Natural killer cell (primary cell): ENCODE measurements at regions of chr20 and their contacts with region 1.

Region 1: DNA sequence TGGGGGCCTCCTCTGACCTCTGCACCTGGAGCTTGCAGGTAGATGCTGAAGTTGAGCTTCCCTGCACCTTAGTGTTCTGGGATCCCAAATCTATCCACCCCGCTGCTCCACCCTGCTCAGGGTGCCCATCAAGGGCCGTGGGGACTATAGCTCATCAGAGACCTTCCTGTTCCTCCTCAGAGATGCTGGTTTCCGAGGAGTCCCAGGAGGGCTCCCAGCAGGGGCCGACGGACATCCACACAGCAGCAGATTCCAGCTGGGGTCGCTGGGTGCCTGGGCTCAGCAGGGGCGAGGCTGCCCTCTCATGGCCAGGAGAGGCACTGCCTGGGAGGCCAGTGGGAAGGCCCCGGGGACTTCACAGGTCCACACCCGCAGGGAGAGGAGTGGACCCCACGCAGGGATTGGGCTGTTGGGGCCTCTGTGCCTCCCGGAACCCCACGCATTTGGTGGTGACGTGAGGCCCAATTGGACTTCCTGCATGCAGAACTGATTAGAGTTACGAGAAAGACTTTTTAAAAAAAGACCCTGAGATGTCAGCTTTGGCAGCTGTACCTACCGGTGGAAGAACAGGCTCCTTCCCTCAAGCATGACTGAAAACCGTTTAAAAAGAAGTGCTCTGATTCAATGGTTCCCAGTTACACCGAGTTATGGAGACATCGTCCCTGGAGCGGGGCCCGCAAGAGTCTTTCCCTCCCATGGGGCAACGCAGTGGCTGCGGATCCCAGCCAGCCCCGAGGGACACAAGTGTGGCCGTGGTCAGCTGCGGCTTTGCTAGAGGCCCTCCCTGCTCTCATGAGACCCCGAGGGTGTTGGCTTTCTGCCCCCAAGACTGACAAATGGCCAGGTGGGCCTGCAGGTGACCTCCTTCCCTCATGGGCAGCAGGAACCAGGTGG is 25.3 kb upstream of the SLCO4A1 start:
- DNase-seq: peak; percentile 70 to 82
- ATAC-seq: peak; percentile 58 to 83 (median 80)
- H3K4me3 ChIP-seq: no peak overlapping the region
- H3K4me3 Mint-ChIP-seq: peak overlapping the region; percentile 83
- H3K27ac ChIP-seq: peak overlapping the region; percentile 53
- H3K27ac Mint-ChIP-seq: peak overlapping the region; percentile 89 to 95
- H3K4me1 ChIP-seq: peaks cover 30% of the 10 kb centered on the region
- H3K4me1 Mint-ChIP-seq: peaks cover 21 to 32% of the 10 kb centered on the region in 2 donors
- H3K27me3 ChIP-seq: no peaks in the 10 kb centered on the region
- H3K27me3 Mint-ChIP-seq: no peaks in the 10 kb centered on the region
- CTCF ChIP-seq: peak; percentile 98

Region 2: GRCh38 chr20:62386383-62387218 is 230.4 kb before region 1 on chr20 and contains the start of gene RPS21:
- intact Hi-C with region 1: loop called (anchors 2 kb)
- DNase-seq: peak; percentile 93 to 97
- ATAC-seq: peak; percentile 95
- H3K4me3 ChIP-seq: peak within 1 kb of the TSS; percentile 89
- H3K4me3 Mint-ChIP-seq: peak within 1 kb of the TSS; percentile 87
- H3K27ac ChIP-seq: peak within 1 kb of the TSS; percentile 97
- H3K27ac Mint-ChIP-seq: peak within 1 kb of the TSS; percentile 84 to 94
- H3K4me1 ChIP-seq: peaks cover 29% of the 10 kb centered on the region
- H3K4me1 Mint-ChIP-seq: peaks cover 31 to 54% of the 10 kb centered on the region in 2 donors
- H3K27me3 ChIP-seq: no peaks in the 10 kb centered on the region
- H3K27me3 Mint-ChIP-seq: no peaks in the 10 kb centered on the region
- CTCF ChIP-seq: no peak
- total RNA-seq, gene RPS21: 887 to 1,244 (median 1,112) TPM

Region 3: GRCh38 chr20:62500237-62500864 is 116.6 kb before region 1 on chr20:
- intact Hi-C with region 1: loop called (anchors 1 kb)
- DNase-seq: peak; percentile 75 to 88
- ATAC-seq: peak; percentile 79 to 82 (median 79)
- H3K4me3 ChIP-seq: no peak overlapping the region
- H3K4me3 Mint-ChIP-seq: no peak overlapping the region
- H3K27ac ChIP-seq: no peak overlapping the region
- H3K27ac Mint-ChIP-seq: peak overlapping the region in 1 of 2 donors; percentile 62
- H3K4me1 ChIP-seq: peaks cover 14% of the 10 kb centered on the region
- H3K4me1 Mint-ChIP-seq: peaks cover 0 to 12% of the 10 kb centered on the region in 2 donors
- H3K27me3 ChIP-seq: no peaks in the 10 kb centered on the region
- H3K27me3 Mint-ChIP-seq: no peaks in the 10 kb centered on the region
- CTCF ChIP-seq: peak; percentile 74

Region 4: DNA sequence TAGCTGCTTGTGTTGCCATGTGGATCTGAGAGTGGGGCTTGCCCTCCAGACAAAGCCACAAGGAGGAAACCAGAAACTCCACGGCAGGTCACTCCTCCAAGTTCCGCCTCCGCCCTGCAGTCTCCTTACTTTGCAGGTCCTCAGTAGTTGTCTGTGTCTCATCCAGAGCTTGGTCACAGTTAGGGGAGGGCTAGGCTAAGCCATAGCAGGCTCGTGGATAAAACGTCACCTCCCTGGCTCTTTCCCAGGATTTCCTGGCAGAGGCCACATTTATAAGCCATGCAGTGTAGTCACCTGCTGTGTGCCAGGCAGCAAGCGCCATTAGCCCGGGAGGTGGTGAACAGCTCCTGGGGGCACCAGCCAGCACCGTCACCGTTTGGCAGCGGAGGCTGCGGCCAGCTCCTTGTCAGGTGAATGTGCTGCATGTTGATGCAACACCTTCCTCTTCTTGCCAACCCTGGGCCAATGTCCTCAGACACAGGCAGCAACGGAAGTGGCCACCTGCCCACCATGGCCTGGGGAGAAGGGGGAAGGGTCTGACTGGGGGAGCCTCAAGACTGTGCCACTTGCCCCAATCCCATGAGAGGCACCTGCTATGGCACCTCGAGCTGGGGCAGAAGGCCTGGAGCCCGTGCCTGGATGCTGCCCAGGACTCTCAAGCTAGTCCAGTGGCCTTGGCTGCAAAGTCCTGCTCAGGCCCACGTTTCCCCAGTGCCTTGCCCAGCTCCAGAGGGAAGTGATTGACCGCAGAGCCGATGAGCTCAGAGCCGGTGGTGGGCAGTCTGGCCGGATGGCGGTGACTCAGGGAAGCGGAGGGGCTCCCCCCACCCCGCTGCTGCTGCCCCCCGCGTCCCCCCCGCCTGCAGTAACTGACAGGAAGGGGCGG is 13.7 kb before region 1 on chr20:
- intact Hi-C with region 1: loop called (anchors 1 kb)
- DNase-seq: peak; percentile 65 to 67
- ATAC-seq: peak; percentile 67 to 83 (median 71)
- H3K4me3 ChIP-seq: peak overlapping the region; percentile 14
- H3K4me3 Mint-ChIP-seq: peak overlapping the region; percentile 84
- H3K27ac ChIP-seq: peak overlapping the region; percentile 70
- H3K27ac Mint-ChIP-seq: peak overlapping the region; percentile 88 to 96
- H3K4me1 ChIP-seq: peaks cover 71% of the 10 kb centered on the region
- H3K4me1 Mint-ChIP-seq: peaks cover 35 to 52% of the 10 kb centered on the region in 2 donors
- H3K27me3 ChIP-seq: no peaks in the 10 kb centered on the region
- H3K27me3 Mint-ChIP-seq: no peaks in the 10 kb centered on the region
- CTCF ChIP-seq: no peak

Region 5: DNA sequence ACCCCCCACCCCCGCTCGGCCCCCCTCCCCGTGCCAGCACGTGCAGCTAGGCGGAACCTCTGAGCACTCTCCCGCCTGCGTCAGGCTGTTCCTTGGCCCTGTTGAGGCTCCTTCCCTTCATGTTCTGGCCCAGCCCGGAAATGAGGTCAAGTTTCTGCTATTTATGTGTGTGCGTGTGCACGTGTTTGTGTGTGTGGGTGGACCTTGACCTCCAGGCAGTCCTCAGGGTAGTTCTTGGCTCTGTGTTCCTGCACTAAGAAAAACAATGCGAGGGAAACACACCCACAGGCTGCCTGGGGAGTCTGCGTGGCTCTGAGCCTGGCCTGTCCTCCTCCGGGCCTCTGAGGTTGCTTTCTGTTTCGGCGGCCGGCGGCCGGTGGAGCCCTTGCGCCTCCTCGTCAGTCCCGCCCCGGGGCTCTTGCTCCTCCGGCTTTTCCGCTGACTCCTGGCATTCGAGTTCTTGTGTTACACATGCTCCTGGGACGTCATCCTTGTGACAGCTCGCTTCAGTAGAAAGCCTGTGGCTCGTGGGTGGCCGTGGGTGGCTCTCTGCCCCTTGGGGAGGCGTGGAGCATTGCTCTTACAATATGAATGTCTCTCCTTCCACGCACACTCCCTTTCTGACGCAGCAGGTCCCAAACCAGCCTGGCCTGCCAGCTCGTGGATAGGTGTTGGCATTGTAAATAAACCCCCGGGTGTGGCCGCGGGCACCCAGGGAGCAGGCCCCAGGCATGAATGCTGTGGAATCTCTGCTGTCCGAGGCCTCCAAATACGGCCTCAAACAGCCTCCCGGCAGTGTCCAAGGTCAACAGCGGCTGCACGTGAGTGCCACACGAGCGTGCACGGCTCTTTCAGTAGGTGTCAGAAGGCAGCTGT is 35.3 kb after region 1 on chr20:
- intact Hi-C with region 1: loop called (anchors 5 kb)
- DNase-seq: peak; percentile 55 to 86
- ATAC-seq: peak; percentile 75 to 85 (median 75)
- H3K4me3 ChIP-seq: peak overlapping the region; percentile 36
- H3K4me3 Mint-ChIP-seq: peak overlapping the region; percentile 91
- H3K27ac ChIP-seq: peak overlapping the region; percentile 95
- H3K27ac Mint-ChIP-seq: peak overlapping the region; percentile 92 to 97
- H3K4me1 ChIP-seq: peaks cover 38% of the 10 kb centered on the region
- H3K4me1 Mint-ChIP-seq: peaks cover 19 to 20% of the 10 kb centered on the region in 2 donors
- H3K27me3 ChIP-seq: no peaks in the 10 kb centered on the region
- H3K27me3 Mint-ChIP-seq: no peaks in the 10 kb centered on the region
- CTCF ChIP-seq: no peak